Ovary (tissue), 10 donors: ENCODE measurements at regions of chr17 and their contacts with region 1.

Region 1: GRCh38 chr17:2369551-2370210 is 31.2 kb downstream of the MNT start:
- DNase-seq: no peak
- H3K4me3 ChIP-seq: no peak overlapping the region
- H3K27ac ChIP-seq: no peak overlapping the region
- H3K4me1 ChIP-seq: no peaks in the 10 kb centered on the region
- H3K27me3 ChIP-seq: no peaks in the 10 kb centered on the region
- CTCF ChIP-seq: no peak
- EP300 ChIP-seq: no peak
- POLR2A ChIP-seq: no peak

Region 2: GRCh38 chr17:2323629-2324314 is 45.9 kb before region 1 on chr17:
- intact Hi-C with region 1: no loop called
- DNase-seq: no peak
- H3K4me3 ChIP-seq: no peak overlapping the region
- H3K27ac ChIP-seq: no peak overlapping the region
- H3K4me1 ChIP-seq: no peaks in the 10 kb centered on the region
- H3K27me3 ChIP-seq: no peaks in the 10 kb centered on the region
- CTCF ChIP-seq: no peak
- EP300 ChIP-seq: no peak
- POLR2A ChIP-seq: no peak

Region 3: GRCh38 chr17:2814481-2815341 is 445.0 kb after region 1 on chr17:
- intact Hi-C with region 1: loop called in 1 of 4 experiments (anchors 5 kb)
- DNase-seq: no peak
- H3K4me3 ChIP-seq: no peak overlapping the region
- H3K27ac ChIP-seq: no peak overlapping the region
- H3K4me1 ChIP-seq: no peaks in the 10 kb centered on the region
- H3K27me3 ChIP-seq: no peaks in the 10 kb centered on the region
- CTCF ChIP-seq: no peak
- EP300 ChIP-seq: no peak
- POLR2A ChIP-seq: no peak